ENCODE measurements at regions of chrX and their contacts with region 1.

Region 1: GRCh38 chrX:129772796-129773431 is 6.8 kb upstream of the SASH3 start:
- H3K4me3 Mint-ChIP-seq: peak overlapping the region; percentile 57
- H3K27ac Mint-ChIP-seq: peak overlapping the region; percentile 96
- H3K4me1 Mint-ChIP-seq: peaks cover 54% of the 10 kb centered on the region
- H3K27me3 Mint-ChIP-seq: no peaks in the 10 kb centered on the region

Region 2: GRCh38 chrX:129478516-129478915 is 294.4 kb before region 1 on chrX:
- intact Hi-C with region 1: no loop called
- H3K4me3 Mint-ChIP-seq: no peak overlapping the region
- H3K27ac Mint-ChIP-seq: no peak overlapping the region
- H3K4me1 Mint-ChIP-seq: no peaks in the 10 kb centered on the region
- H3K27me3 Mint-ChIP-seq: no peaks in the 10 kb centered on the region

Region 3: DNA sequence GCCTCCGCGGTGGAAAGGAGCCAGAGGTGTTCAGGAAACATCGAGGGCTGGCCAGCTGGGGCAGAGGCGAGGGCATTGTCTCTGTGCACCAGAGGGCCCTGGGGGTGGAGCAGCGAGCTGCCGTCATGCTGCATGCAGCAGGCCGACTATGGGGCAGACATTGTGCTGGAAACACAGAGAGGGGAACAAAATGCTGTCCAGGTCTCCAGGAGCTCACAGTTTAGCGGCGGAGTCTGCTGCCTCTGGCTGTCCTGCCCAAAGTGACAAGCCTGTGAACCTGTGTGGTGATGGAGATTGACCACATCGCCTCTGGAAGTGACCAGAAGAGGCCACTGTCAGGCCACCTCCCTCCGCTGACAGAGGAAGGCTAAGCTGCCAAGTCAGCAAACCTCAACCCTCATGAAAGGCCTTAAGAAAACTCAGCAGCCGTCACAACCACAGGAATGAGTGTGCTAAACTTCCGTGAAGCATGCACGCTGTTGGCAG is 13.3 kb before region 1 on chrX:
- intact Hi-C with region 1: loop called (anchors 2 kb)
- H3K4me3 Mint-ChIP-seq: peak overlapping the region; percentile 23
- H3K27ac Mint-ChIP-seq: peak overlapping the region; percentile 96
- H3K4me1 Mint-ChIP-seq: peaks cover 76% of the 10 kb centered on the region
- H3K27me3 Mint-ChIP-seq: no peaks in the 10 kb centered on the region

Region 4: GRCh38 chrX:130055103-130055502 is 282.2 kb after region 1 on chrX:
- intact Hi-C with region 1: no loop called
- H3K4me3 Mint-ChIP-seq: no peak overlapping the region
- H3K27ac Mint-ChIP-seq: no peak overlapping the region
- H3K4me1 Mint-ChIP-seq: peaks cover 16% of the 10 kb centered on the region
- H3K27me3 Mint-ChIP-seq: no peaks in the 10 kb centered on the region